Activated naive CD4-positive, alpha-beta T cell treated with anti-CD3 and anti-CD28 coated beads for 36 hours (primary cell): ENCODE measurements at regions of chr11 and their contacts with region 1.

Region 1: DNA sequence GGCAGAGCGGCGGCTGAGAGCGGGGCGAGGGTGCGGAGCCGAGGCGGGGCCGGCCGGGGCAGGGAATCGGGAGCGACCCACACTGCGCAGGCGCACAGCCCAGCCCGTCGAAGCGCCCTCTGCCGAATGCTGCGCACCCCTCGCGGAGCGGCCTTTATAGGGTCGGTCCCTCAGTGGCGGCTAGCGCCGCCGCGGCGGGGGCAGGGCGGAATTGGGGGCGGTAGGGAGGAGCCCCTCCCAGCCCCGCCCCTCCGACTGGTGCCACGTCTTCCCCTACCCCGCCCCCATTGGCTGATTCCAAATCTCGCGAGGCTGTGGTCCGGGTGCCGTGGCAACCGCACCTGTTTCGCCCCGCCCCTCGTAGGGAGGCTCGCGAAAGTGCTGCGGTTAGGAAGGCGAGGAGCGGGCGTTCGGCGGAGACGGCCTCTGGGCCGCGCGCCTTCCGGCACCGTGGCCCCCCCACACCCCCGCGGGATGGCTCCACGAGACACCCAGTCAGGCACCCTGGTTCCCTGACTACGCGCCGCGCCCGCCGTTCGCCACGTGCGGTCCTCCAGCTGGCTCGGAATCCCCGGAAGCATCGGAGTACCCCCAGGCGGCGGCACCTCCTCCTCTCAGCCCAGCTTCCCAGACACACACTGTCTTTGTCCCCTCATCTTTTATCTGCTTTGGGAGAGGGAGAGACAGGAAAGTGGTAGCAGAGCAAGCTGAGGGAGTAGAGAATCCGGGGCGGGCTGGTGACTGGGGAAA is at the start of gene EHD1:
- DNase-seq: peak; percentile 100
- H3K4me3 Mint-ChIP-seq: peak within 1 kb of the TSS; percentile 93
- H3K27ac Mint-ChIP-seq: peak within 1 kb of the TSS; percentile 96
- H3K4me1 Mint-ChIP-seq: peaks cover 58% of the 10 kb centered on the region
- H3K27me3 Mint-ChIP-seq: no peaks in the 10 kb centered on the region
- total RNA-seq, gene EHD1: 124 to 132 TPM

Region 2: DNA sequence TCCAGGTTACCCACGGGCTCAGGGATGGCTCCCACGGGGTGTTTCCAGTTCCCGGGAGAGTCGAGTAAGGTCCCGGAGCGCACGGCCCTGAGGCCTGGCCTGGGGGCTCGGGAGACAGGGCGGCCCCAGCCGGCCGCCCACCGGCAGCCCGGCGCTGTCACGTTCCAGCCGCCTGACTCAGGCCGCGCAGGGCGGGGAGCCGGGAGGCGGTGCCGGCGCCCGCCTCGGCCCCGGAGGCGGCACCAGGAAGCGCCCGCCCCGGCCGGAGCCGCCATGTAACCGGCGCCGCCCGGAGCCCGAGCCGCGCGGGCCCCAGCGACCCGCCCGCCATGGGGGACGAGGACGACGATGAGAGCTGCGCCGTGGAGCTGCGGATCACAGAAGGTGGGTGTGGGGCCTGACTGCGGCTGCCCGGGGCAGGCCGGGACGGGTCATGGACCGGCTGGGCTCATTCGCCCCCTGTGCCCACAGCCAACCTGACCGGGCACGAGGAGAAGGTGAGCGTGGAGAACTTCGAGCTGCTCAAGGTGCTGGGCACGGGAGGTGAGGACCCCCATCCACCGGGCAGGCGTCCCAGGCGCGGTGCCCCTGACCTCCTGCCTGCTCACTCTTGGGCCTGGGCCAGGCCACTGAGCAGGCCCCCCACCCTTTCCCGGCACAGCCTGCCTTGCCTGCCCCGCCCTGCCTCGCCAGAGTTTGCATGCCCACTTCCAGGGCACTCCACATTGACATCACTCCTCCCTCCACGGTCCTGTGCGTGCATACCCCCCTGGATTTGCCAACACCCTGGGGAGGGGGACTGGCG is 519.6 kb before region 1 on chr11 and contains the start of gene RPS6KA4:
- CTCF ChIA-PET with region 1: no interaction called
- intact Hi-C with region 1: no loop called
- DNase-seq: peak; percentile 60
- H3K4me3 Mint-ChIP-seq: peak within 1 kb of the TSS; percentile 91
- H3K27ac Mint-ChIP-seq: peak within 1 kb of the TSS; percentile 34
- H3K4me1 Mint-ChIP-seq: peaks cover 41% of the 10 kb centered on the region
- H3K27me3 Mint-ChIP-seq: no peaks in the 10 kb centered on the region
- total RNA-seq, gene RPS6KA4: 19.1 to 21.3 TPM

Region 3: DNA sequence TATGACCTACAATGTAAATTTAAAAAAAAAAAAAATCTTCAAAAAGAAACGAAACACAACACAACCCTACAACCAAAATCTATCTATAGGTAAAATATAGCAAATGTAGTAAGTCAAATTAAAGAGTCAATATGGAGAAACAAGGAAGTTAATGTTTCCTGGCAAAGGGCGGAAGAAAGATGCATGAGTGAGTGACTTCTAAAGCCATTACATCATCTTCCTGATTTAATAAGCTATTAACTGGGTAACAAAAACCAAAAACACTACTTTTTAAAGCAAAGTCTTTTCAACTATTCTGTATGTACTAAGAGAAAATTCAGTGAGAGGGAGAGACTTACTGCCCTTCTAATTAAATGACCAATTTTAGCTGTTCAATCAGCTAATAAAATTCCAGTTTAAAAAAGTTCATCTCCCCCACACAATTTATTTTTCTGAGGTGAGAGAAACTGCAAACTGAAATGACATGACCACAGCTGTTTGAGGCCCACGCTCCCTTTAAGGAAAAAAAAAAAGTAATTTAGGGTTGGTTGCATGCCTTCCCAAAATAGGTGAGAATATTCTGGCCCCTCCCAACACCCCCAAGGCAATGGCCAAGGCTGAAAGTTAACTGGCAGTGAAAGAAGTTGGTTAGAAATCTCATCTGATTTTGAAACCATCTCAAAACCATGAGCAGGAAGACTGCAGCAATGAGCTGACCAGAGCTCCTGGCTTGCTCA is 106.2 kb before region 1 on chr11:
- CTCF ChIA-PET with region 1: no interaction called
- intact Hi-C with region 1: no loop called
- DNase-seq: no peak
- H3K4me3 Mint-ChIP-seq: peak overlapping the region; percentile 43
- H3K27ac Mint-ChIP-seq: peak overlapping the region; percentile 95
- H3K4me1 Mint-ChIP-seq: peaks cover 96% of the 10 kb centered on the region
- H3K27me3 Mint-ChIP-seq: no peaks in the 10 kb centered on the region

Region 4: DNA sequence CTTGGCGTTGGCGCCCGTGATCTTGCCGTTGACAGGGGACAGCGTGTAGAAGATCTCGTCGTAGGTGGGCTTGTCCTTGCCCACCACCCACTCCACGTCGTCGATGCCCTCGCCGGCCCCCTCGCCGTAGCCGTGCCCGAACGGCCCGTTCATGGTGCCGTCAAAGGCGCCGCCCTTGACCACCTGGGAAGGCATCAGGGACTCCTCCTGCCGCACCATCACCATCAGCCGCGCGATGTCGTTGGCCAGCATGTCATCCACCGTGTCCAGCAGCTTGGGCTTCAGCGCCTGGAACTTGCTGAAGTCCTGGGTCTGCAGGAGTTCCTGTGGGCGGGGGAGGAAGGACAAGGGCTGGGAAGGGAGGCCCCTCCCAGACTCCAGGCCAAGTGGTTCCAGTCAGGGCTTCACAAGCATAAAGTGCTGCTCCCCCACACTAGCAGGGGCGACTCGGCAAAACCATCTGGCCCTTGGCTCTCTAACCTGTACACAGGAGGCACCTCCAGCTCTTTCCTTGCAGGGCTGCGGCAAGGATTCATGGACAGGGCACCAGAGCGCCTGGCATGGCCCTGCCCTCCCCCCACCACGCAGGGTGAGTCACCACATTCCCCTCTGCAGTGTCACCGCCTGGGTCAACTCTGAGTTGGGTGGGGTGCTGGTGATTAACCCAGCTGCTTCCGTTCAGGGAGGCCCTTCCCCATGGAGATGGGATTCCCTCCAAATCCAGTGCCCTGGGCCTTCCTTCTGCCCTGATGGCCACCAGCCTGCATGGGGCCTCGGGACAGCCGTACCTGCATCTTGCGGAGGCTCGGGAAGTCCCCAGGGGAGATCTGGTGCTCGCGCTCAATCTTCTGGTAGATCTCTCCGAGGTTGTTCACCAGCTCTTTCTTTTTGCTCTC is 23.9 kb before region 1 on chr11:
- CTCF ChIA-PET with region 1: interaction called, 992 read pairs
- intact Hi-C with region 1: loop called (anchors 1 kb)
- DNase-seq: peak; percentile 67
- H3K4me3 Mint-ChIP-seq: no peak overlapping the region
- H3K27ac Mint-ChIP-seq: peak overlapping the region; percentile 89
- H3K4me1 Mint-ChIP-seq: peaks cover 94% of the 10 kb centered on the region
- H3K27me3 Mint-ChIP-seq: no peaks in the 10 kb centered on the region

Region 5: DNA sequence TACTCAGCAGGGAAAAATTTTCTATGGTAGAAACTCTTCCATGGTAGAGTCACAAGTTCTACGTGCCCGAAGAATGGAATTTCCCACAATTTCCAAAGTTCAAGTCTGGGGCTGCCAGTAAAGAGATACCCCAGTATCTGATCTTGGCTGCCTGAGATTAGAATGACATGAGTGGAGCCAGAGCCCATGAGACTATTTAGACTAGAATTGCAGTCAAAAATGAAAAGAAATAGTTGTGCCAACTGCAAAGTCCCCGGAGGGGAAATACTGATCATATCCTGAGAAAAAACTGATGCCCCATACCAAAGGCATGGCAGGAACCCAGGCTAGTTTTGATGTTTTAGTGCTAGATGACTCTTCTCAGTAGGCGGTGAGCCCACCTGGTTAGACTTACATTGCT is 82.0 kb after region 1 on chr11:
- CTCF ChIA-PET with region 1: no interaction called
- intact Hi-C with region 1: no loop called
- DNase-seq: no peak
- H3K4me3 Mint-ChIP-seq: no peak overlapping the region
- H3K27ac Mint-ChIP-seq: no peak overlapping the region
- H3K4me1 Mint-ChIP-seq: peaks cover 7% of the 10 kb centered on the region
- H3K27me3 Mint-ChIP-seq: no peaks in the 10 kb centered on the region